Activated CD4-positive, alpha-beta T cell treated with anti-CD3 and anti-CD28 coated beads for 36 hours (primary cell): ENCODE measurements at regions of chr1 and their contacts with region 1.

Region 1: GRCh38 chr1:4652631-4653327 is 1.6 kb upstream of the AJAP1 start:
- DNase-seq: peak; percentile 76
- ATAC-seq: peak; percentile 85
- H3K4me3 Mint-ChIP-seq: no peak overlapping the region
- H3K27ac Mint-ChIP-seq: no peak overlapping the region
- H3K4me1 Mint-ChIP-seq: no peaks in the 10 kb centered on the region
- H3K27me3 Mint-ChIP-seq: peaks cover 25% of the 10 kb centered on the region

Region 2: GRCh38 chr1:3910857-3911845 is 741.6 kb before region 1 on chr1:
- CTCF ChIA-PET with region 1: no interaction called
- POLR2A ChIA-PET with region 1: no interaction called
- intact Hi-C with region 1: loop called in 1 of 2 experiments (anchors 2 kb)
- DNase-seq: peak; percentile 90
- ATAC-seq: peak; percentile 87
- H3K4me3 Mint-ChIP-seq: no peak overlapping the region
- H3K27ac Mint-ChIP-seq: no peak overlapping the region
- H3K4me1 Mint-ChIP-seq: peaks cover 3% of the 10 kb centered on the region
- H3K27me3 Mint-ChIP-seq: no peaks in the 10 kb centered on the region

Region 3: GRCh38 chr1:4612991-4613390 is 39.8 kb before region 1 on chr1:
- CTCF ChIA-PET with region 1: no interaction called
- POLR2A ChIA-PET with region 1: no interaction called
- intact Hi-C with region 1: no loop called
- DNase-seq: no peak
- ATAC-seq: no peak
- H3K4me3 Mint-ChIP-seq: no peak overlapping the region
- H3K27ac Mint-ChIP-seq: no peak overlapping the region
- H3K4me1 Mint-ChIP-seq: no peaks in the 10 kb centered on the region
- H3K27me3 Mint-ChIP-seq: peaks cover 8% of the 10 kb centered on the region

Region 4: DNA sequence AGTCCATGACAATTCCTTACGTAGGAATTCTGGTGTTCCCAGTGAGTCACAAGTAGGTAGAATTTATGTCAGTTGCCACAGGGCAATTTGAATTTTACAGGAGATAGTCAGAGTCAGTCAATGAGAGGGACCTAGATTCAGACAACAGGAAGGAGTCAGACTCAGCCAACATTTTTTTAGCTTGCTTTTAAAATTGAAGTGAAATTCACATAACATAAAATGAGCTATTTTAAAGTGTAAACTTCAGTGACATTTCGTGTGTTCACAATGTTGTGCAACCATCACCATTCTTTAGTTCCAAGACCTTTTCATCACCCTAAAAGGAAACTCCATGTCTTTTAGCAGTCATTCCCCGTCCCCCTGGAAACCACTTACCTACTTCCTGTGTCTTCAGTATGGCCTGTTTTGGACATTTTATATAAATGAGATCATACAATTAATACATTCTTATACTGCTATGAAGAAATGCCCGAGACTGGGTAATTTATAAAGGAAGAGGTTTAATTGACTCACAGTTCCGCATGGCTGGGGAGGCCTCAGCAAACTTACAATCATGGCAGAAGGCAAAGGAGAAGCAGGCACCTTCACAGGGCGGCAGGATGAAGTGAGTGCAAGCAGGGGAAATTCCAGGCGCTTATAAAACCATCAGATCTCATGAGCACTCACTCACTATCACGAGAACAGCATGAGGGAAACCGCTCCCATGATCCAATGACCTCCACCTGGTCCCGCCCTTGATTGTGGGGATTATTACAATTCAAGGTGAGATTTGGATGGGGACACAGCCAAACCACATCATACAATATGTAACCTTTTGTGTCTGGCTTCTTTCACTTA is 16.3 kb after region 1 on chr1:
- CTCF ChIA-PET with region 1: no interaction called
- POLR2A ChIA-PET with region 1: no interaction called
- intact Hi-C with region 1: no loop called
- DNase-seq: no peak
- ATAC-seq: no peak
- H3K4me3 Mint-ChIP-seq: no peak overlapping the region
- H3K27ac Mint-ChIP-seq: no peak overlapping the region
- H3K4me1 Mint-ChIP-seq: no peaks in the 10 kb centered on the region
- H3K27me3 Mint-ChIP-seq: peaks cover 9% of the 10 kb centered on the region

Region 5: GRCh38 chr1:4825800-4826450 is 173.1 kb after region 1 on chr1:
- CTCF ChIA-PET with region 1: no interaction called
- POLR2A ChIA-PET with region 1: no interaction called
- intact Hi-C with region 1: loop called in 1 of 2 experiments (anchors 5 kb)
- DNase-seq: peak; percentile 6
- ATAC-seq: no peak
- H3K4me3 Mint-ChIP-seq: no peak overlapping the region
- H3K27ac Mint-ChIP-seq: no peak overlapping the region
- H3K4me1 Mint-ChIP-seq: no peaks in the 10 kb centered on the region
- H3K27me3 Mint-ChIP-seq: peaks cover 4% of the 10 kb centered on the region

Region 6: DNA sequence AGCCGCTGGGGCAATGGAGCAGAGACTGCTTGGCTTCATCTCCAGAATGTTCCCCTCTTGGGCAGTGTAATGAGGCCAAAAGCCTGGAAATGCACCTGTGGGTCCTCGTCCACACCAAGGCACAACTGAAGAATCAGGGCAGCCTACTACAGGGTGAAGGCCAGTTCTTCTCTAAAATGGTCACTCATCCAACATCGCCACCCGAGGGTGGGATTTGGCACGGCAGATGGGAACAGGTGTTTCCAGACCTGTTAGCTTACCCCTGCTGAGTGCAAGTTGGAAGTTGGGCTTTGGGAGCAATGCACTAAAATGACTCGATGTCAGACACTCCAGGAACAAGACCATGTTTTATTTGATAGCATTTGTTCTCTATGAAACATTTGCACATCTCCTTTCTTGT is 795.7 kb after region 1 on chr1:
- CTCF ChIA-PET with region 1: no interaction called
- POLR2A ChIA-PET with region 1: no interaction called
- intact Hi-C with region 1: loop called in 1 of 2 experiments (anchors 2 kb)
- DNase-seq: peak; percentile 47
- ATAC-seq: no peak
- H3K4me3 Mint-ChIP-seq: no peak overlapping the region
- H3K27ac Mint-ChIP-seq: no peak overlapping the region
- H3K4me1 Mint-ChIP-seq: peaks cover 2% of the 10 kb centered on the region
- H3K27me3 Mint-ChIP-seq: peaks cover 3% of the 10 kb centered on the region

Region 7: DNA sequence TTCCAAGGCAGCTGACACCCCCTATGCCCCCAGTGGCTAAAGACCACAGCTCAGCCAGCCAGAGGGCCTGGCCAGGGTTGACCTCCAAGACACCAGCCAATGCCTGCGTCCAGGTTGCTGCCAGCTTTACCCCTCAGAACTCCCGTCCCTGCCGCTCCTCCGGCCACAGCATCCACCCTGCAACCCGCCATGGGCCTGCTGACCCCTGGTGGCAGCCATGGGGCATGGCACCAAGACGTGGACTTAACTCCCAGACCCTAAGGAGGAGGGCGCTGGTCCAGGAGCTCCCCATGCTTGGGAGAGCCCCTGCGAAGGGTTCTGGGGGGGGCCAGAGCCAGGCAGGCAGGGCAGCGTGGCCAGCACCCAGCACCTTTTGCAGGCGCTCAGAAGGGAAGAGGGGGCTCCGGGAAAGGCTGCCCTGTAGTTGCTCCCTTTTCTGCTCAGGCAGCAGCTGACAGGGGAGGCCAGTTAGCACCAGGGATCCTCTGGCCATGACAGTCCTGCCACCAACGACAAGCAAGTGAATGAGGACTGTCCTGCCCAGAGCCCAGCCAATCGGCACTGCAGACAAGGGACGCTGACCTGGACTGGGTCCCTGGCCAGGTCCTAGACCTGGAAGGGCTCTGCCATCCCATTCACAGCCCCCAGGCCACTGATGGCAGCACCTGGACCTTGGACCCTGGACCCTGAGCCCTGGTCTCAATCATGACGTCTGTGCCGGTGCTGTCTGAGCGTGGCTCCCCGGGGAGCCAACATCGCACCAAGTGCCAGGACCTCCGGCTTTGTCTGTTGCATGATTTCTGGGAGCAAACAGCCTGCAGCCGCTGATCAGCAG is 1093.2 kb after region 1 on chr1:
- CTCF ChIA-PET with region 1: no interaction called
- POLR2A ChIA-PET with region 1: no interaction called
- intact Hi-C with region 1: loop called (anchors 5 kb)
- DNase-seq: peak; percentile 77
- ATAC-seq: peak; percentile 76
- H3K4me3 Mint-ChIP-seq: no peak overlapping the region
- H3K27ac Mint-ChIP-seq: no peak overlapping the region
- H3K4me1 Mint-ChIP-seq: no peaks in the 10 kb centered on the region
- H3K27me3 Mint-ChIP-seq: peaks cover 13% of the 10 kb centered on the region